Activated T-helper 1 cell treated with anti-CD3 and anti-CD28 coated beads, Interleukin-12 subunit alpha, Interleukin-12 subunit beta, Interleukin-2, Interleukin-4 antibody, amounts not matched to agents 30 ng/mL and 10 ng/mL and 1 ng/mL, durations not matched to agents 14 hours and 24 hours and 36 hours (primary cell): ENCODE measurements at regions of chr3 and their contacts with region 1.

Region 1: GRCh38 chr3:102113411-102114041 is 264.2 kb downstream of the NFKBIZ start:
- DNase-seq: no peak
- H3K4me3 Mint-ChIP-seq: peak overlapping the region; percentile 4
- H3K27ac Mint-ChIP-seq: peak overlapping the region; percentile 67
- H3K4me1 Mint-ChIP-seq: peaks cover 41% of the 10 kb centered on the region
- H3K27me3 Mint-ChIP-seq: no peaks in the 10 kb centered on the region

Region 2: GRCh38 chr3:101928890-101929289 is 184.6 kb before region 1 on chr3:
- intact Hi-C with region 1: loop called (anchors 5 kb)
- DNase-seq: no peak
- H3K4me3 Mint-ChIP-seq: no peak overlapping the region
- H3K27ac Mint-ChIP-seq: no peak overlapping the region
- H3K4me1 Mint-ChIP-seq: peaks cover 35% of the 10 kb centered on the region
- H3K27me3 Mint-ChIP-seq: peaks cover 10% of the 10 kb centered on the region